Activated CD4-positive, alpha-beta T cell treated with anti-CD3 and anti-CD28 coated beads for 36 hours (primary cell): ENCODE measurements at regions of chr6 and their contacts with region 1.

Region 1: GRCh38 chr6:107318100-107318736 is 141.1 kb downstream of the PDSS2 start:
- DNase-seq: peak; percentile 71
- ATAC-seq: peak; percentile 72
- H3K4me3 Mint-ChIP-seq: no peak overlapping the region
- H3K27ac Mint-ChIP-seq: no peak overlapping the region
- H3K4me1 Mint-ChIP-seq: peaks cover 18% of the 10 kb centered on the region
- H3K27me3 Mint-ChIP-seq: no peaks in the 10 kb centered on the region

Region 2: DNA sequence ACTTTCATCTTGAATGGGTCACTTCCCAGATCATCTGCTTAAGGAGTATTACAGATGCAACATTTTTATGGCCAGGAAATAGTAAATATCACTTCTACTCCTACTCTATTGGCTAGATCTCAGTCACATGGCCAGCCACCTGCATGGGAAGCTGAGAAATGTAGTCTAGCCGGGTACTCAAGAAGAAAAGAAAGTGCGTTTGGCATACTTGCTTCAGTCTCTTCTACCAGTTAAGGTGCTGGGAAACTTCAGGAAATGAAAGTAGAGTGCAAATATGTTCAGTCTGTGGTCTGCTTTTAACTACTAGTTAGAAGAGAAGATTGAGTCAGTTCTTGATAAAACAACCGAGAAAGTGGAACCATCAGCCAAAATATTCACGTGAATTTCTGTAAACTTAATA is 11.9 kb after region 1 on chr6:
- CTCF ChIA-PET with region 1: interaction called, 24 read pairs
- POLR2A ChIA-PET with region 1: no interaction called
- intact Hi-C with region 1: no loop called
- DNase-seq: peak; percentile 54
- ATAC-seq: peak; percentile 96
- H3K4me3 Mint-ChIP-seq: no peak overlapping the region
- H3K27ac Mint-ChIP-seq: peak overlapping the region; percentile 69
- H3K4me1 Mint-ChIP-seq: peaks cover 17% of the 10 kb centered on the region
- H3K27me3 Mint-ChIP-seq: no peaks in the 10 kb centered on the region

Region 3: DNA sequence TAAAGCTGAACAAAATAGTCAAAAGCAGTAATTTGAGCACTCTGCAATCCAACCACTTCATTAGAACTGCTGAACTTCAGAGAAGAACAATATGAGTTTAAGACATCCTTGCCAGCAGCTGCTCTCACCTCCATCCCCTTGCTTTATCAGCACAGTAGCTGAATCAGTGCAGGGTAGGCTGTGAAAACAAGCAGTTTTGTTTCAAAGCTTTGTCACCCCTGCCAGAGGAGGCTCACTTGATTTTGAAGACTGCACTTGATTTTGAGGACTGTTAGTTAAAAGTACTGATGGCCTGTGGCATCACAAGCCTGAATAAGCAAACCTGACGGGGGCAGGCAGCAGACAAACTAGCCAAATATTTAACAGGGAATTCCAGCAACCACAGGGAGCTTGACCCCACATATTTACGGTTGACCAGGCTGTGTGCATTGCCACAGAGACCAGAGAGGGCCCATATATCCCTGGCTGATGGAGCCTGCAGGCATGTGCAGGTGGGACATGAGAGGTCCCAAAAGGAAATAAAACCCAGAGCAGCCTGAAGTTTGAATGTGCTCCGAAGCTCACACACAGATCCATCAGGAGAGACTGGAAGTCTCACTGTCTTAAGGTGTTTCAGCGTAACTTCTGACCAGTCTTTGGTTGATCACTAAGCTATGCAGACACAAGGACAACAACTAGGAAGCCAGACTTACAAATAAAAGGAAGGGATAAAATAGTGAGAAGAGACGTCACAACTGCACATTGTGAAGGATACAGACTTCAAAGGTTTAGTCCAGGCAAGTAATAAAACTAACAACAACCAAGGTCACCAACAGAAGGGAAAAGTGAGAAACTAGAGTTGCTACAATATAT is 43.8 kb after region 1 on chr6:
- CTCF ChIA-PET with region 1: no interaction called
- POLR2A ChIA-PET with region 1: no interaction called
- intact Hi-C with region 1: no loop called
- DNase-seq: no peak
- ATAC-seq: no peak
- H3K4me3 Mint-ChIP-seq: no peak overlapping the region
- H3K27ac Mint-ChIP-seq: no peak overlapping the region
- H3K4me1 Mint-ChIP-seq: peaks cover 4% of the 10 kb centered on the region
- H3K27me3 Mint-ChIP-seq: no peaks in the 10 kb centered on the region

Region 4: DNA sequence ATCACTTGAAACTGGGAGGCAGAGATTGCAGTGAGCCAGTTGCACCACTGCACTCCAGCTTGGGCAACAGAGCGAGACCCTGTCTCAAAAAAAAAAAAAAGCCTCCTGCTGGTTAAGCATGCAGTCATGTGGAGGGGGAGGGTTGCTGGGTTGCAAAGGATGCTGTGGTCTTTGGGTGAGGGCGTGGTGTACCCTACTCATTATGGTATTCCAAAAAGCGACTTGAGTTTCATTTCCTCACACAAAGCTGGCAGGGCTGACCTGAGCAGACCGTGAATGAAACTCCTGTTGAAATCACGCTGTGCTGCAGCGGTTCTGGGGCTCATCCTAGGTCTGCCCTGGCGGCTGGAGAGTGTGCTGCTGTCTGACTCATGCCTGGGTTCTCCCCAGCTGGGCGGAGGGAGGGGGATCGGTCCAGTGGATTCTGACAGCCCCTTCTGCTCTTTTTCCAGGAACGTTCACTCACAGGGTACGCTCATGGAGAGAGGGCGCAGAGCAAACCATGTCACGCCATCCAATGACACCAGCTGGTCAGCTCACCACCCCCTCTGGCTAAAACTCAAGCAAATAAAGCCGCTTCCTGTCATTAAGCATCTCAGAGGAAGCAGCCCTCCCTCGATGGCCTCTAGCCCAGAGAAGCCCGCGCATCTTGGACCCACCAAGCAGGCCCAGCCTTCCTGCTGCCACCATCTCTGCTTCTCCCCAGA is 339.7 kb after region 1 on chr6:
- CTCF ChIA-PET with region 1: no interaction called
- POLR2A ChIA-PET with region 1: no interaction called
- intact Hi-C with region 1: loop called (anchors 5 to 10 kb)
- DNase-seq: peak; percentile 81
- ATAC-seq: peak; percentile 99
- H3K4me3 Mint-ChIP-seq: peak overlapping the region; percentile 8
- H3K27ac Mint-ChIP-seq: no peak overlapping the region
- H3K4me1 Mint-ChIP-seq: peaks cover 27% of the 10 kb centered on the region
- H3K27me3 Mint-ChIP-seq: no peaks in the 10 kb centered on the region